ENCODE measurements at regions of chr22 and their contacts with region 1.

Region 1: GRCh38 chr22:35840302-35840739 is 122.6 kb downstream of the APOL5 start:
- DNase-seq: peak; percentile 74 to 90
- ATAC-seq: peak; percentile 71 to 83
- H3K4me3 ChIP-seq: peak overlapping the region; percentile 51 to 60 (median 55)
- H3K27ac ChIP-seq: peak overlapping the region; percentile 86 to 94 (median 88)
- H3K4me1 ChIP-seq: peaks cover 82% of the 10 kb centered on the region in 2 donors
- H3K27me3 ChIP-seq: no peaks in the 10 kb centered on the region
- CTCF ChIP-seq: peak in 1 of 5 experiments; percentile 4
- POLR2A ChIP-seq: no peak

Region 2: GRCh38 chr22:35627264-35628041 is 212.9 kb before region 1 on chr22:
- in situ Hi-C with region 1: no loop called
- intact Hi-C with region 1: loop called (anchors 5 kb)
- DNase-seq: peak in 1 of 2 donors; percentile 81
- ATAC-seq: peak; percentile 22 to 35
- H3K4me3 ChIP-seq: peak overlapping the region; percentile 45 to 62 (median 59)
- H3K27ac ChIP-seq: peak overlapping the region; percentile 62 to 76 (median 68)
- H3K4me1 ChIP-seq: peaks cover 12 to 24% of the 10 kb centered on the region in 2 donors
- H3K27me3 ChIP-seq: no peaks in the 10 kb centered on the region
- CTCF ChIP-seq: peak; percentile 23 to 74 (median 46)
- POLR2A ChIP-seq: no peak

Region 3: GRCh38 chr22:35739076-35739930 is 101.0 kb before region 1 on chr22:
- in situ Hi-C with region 1: no loop called
- intact Hi-C with region 1: loop called (anchors 5 kb)
- DNase-seq: peak in 1 of 2 donors; percentile 48
- ATAC-seq: peak; percentile 28 to 35
- H3K4me3 ChIP-seq: no peak overlapping the region
- H3K27ac ChIP-seq: peak overlapping the region; percentile 46 to 87 (median 82)
- H3K4me1 ChIP-seq: peaks cover 45 to 46% of the 10 kb centered on the region in 2 donors
- H3K27me3 ChIP-seq: no peaks in the 10 kb centered on the region
- CTCF ChIP-seq: peak in 4 of 5 experiments; percentile 22 to 62 (median 42)
- POLR2A ChIP-seq: no peak

Region 4: DNA sequence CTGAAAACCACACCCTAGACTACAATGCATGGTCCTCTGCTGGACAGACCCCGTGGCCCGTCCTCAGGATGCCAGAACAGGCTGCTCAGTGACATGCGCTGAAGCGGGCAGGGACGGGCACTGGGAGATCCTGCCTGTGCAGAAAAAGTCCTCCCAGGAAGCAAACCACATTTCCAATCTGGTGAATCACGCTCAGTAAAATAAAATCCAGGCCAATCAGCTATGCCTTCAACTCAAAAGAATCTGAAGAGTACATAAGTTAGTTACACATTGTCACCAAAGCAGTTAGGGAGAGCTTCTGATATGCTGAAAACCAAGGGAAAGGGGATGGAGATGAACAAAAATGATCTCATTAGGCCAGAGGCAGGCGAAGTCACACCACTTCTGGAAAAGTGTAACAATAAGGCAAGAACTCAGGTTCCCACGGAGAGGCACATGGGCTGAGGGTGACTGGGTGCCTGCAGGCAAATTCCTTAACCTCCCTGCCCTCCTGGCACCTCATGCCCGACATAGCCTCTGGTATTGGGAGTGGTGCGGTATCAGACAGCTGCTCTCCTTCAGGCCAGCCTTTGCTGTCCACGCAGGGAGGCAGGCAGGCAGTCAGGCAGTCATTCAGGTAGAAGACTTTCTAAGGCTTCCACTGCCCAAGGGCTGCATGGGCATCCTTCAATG is 56.2 kb before region 1 on chr22:
- in situ Hi-C with region 1: no loop called
- intact Hi-C with region 1: loop called (anchors 5 kb)
- DNase-seq: no peak
- ATAC-seq: no peak
- H3K4me3 ChIP-seq: no peak overlapping the region
- H3K27ac ChIP-seq: peak overlapping the region; percentile 23 to 82 (median 68)
- H3K4me1 ChIP-seq: peaks cover 53 to 77% of the 10 kb centered on the region in 2 donors
- H3K27me3 ChIP-seq: no peaks in the 10 kb centered on the region
- CTCF ChIP-seq: no peak
- POLR2A ChIP-seq: no peak

Region 5: GRCh38 chr22:35802885-35803284 is 37.4 kb before region 1 on chr22:
- in situ Hi-C with region 1: no loop called
- intact Hi-C with region 1: no loop called
- DNase-seq: no peak
- ATAC-seq: no peak
- H3K4me3 ChIP-seq: no peak overlapping the region
- H3K27ac ChIP-seq: peak overlapping the region in 3 of 4 donors; percentile 3 to 35 (median 34)
- H3K4me1 ChIP-seq: peaks cover 37 to 44% of the 10 kb centered on the region in 2 donors
- H3K27me3 ChIP-seq: no peaks in the 10 kb centered on the region
- CTCF ChIP-seq: no peak
- POLR2A ChIP-seq: no peak

Region 6: DNA sequence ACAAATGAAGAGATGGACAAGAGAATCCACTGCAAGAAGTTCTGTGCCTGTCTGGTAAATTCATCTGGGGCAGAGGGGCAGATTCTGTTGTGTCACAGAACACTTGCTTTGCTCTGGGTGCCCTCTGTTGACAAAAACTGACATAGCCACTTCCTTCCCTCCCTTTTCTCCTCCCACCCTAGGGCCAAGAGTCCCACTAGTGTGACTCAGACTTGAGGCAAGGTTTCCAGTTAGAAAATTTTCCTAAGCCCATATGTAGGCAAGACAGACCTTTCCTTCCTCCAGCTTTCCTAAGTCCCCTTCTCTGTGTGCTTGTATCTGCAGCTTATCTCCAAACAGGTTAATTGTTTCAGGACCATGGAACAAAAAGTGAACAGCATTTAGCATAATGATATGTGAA is 81.5 kb after region 1 on chr22:
- in situ Hi-C with region 1: no loop called
- intact Hi-C with region 1: loop called (anchors 2 kb)
- DNase-seq: peak; percentile 50 to 82
- ATAC-seq: peak; percentile 93 to 99
- H3K4me3 ChIP-seq: no peak overlapping the region
- H3K27ac ChIP-seq: peak overlapping the region; percentile 55 to 79 (median 62)
- H3K4me1 ChIP-seq: peaks cover 37 to 49% of the 10 kb centered on the region in 2 donors
- H3K27me3 ChIP-seq: no peaks in the 10 kb centered on the region
- CTCF ChIP-seq: peak; percentile 40 to 79 (median 66)
- POLR2A ChIP-seq: no peak

Region 7: GRCh38 chr22:36425977-36426523 is 585.7 kb after region 1 on chr22:
- in situ Hi-C with region 1: no loop called
- intact Hi-C with region 1: no loop called
- DNase-seq: peak; percentile 24 to 29
- ATAC-seq: no peak
- H3K4me3 ChIP-seq: no peak overlapping the region
- H3K27ac ChIP-seq: peak overlapping the region; percentile 29 to 54 (median 40)
- H3K4me1 ChIP-seq: peaks cover 0 to 6% of the 10 kb centered on the region in 2 donors
- H3K27me3 ChIP-seq: no peaks in the 10 kb centered on the region
- CTCF ChIP-seq: no peak
- POLR2A ChIP-seq: no peak